Aorta (tissue), 5 donors: ENCODE measurements at regions of chr2 and their contacts with region 1.

Region 1: GRCh38 chr2:224938651-224939182 is 103.6 kb downstream of the DOCK10 start:
- DNase-seq: no peak
- ATAC-seq: no peak
- H3K4me3 ChIP-seq: no peak overlapping the region
- H3K27ac ChIP-seq: peak overlapping the region in 1 of 2 donors; percentile 64
- H3K4me1 ChIP-seq: peaks cover 4 to 15% of the 10 kb centered on the region in 2 donors
- H3K27me3 ChIP-seq: no peaks in the 10 kb centered on the region

Region 2: DNA sequence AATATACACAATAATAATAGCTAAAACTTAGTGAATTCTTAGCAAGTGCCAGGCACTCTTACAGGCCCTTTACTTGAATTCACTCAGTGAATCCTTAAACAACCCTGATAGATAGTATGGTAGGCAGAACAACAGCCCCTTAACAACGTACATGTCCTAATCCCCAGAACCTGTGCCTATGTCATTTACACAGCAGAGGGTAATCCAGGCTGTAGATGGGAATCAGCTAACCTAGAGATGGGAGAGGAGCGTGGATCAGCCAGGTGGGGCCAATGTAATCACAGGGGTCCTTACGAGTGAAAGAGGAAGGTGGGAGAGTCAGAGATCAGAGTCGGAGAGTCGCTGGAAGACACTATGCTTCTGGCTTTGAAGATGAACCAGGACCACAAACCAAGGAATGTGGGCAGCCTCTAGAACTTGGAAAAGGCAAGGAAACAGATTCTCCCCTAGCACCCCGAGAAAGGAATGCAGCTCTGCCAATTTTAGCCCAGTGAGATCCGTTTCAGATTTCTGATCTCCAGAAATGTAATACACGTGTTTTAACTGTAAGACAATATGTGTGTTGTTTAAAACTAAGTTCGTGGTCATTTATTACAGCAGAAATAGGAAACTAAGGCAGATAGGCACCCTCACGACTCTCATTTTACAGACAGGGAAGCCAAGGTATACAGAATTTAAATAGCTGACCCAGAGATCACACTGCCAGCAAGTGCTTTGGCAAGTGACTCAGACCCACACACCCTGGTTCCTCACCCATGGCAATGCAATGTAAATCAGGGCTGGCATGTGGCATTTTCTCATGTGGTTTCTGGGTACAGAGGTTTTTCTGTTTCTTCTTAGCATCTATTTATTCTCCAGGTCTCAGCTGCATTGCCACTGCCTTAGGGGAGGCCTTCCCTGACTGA is 34.6 kb after region 1 on chr2:
- intact Hi-C with region 1: loop called in 1 of 2 experiments (anchors 5 kb)
- DNase-seq: peak in 1 of 2 donors; percentile 56
- ATAC-seq: peak; percentile 64
- H3K4me3 ChIP-seq: peak overlapping the region in 1 of 2 donors; percentile 16
- H3K27ac ChIP-seq: peak overlapping the region; percentile 76 to 93
- H3K4me1 ChIP-seq: peaks cover 0 to 10% of the 10 kb centered on the region in 2 donors
- H3K27me3 ChIP-seq: no peaks in the 10 kb centered on the region